ENCODE measurements at regions of chr1 and their contacts with region 1.

Region 1: DNA sequence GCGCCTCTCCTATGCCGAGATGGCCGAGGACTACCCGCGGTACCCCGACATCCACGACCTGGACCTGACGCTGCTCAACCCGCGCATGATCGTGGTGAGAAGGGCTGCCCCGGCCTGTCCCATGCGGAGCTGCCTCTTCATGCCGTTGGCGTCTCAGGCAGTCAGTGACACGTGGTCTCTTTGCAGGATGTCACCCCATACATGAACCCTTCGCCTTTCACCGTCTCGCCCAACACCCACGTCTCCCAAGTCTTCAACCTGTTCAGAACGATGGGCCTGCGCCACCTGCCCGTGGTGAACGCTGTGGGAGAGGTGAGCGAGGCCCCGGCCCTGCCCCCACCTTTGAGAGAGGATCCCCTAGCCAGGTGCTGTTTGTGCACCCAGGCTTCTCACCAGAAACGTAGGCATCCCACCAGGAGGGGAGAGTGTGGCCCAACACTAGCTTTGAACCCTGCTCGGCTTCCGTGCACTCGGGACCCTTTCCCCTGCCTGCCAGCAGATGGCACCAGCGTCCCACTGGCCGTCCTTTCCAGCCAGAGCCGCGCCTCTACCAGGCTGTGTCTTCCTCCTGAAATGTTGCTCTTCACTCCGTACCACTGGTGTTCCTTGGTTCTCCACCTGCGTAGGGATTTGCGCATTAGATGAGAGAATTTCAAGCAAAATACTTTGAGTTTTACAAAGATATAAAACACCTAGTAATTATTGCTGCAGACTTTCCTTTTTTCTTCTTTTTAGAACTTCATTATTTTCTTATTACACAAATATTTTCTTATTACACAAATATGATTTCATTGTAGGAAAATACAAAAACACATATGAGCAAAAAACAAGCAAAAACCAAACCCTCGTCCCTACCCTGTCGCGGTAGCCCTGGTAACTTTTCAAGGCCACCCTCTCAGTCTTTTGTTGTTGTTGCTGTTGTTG is 9.0 kb downstream of the NPPA start:
- DNase-seq: no peak
- H3K4me3 ChIP-seq: no peak overlapping the region
- H3K27me3 ChIP-seq: no peaks in the 10 kb centered on the region
- CTCF ChIP-seq: peak; percentile 100

Region 2: GRCh38 chr1:11828511-11828910 is 10.1 kb before region 1 on chr1:
- CTCF ChIA-PET with region 1: interaction called, 13 read pairs
- POLR2A ChIA-PET with region 1: no interaction called
- DNase-seq: no peak
- H3K4me3 ChIP-seq: no peak overlapping the region
- H3K27me3 ChIP-seq: no peaks in the 10 kb centered on the region
- CTCF ChIP-seq: no peak

Region 3: GRCh38 chr1:11893907-11894251 is 55.3 kb after region 1 on chr1:
- CTCF ChIA-PET with region 1: interaction called, 22 read pairs
- POLR2A ChIA-PET with region 1: no interaction called
- DNase-seq: no peak
- H3K4me3 ChIP-seq: no peak overlapping the region
- H3K27me3 ChIP-seq: peaks cover 14% of the 10 kb centered on the region
- CTCF ChIP-seq: peak; percentile 97

Region 4: DNA sequence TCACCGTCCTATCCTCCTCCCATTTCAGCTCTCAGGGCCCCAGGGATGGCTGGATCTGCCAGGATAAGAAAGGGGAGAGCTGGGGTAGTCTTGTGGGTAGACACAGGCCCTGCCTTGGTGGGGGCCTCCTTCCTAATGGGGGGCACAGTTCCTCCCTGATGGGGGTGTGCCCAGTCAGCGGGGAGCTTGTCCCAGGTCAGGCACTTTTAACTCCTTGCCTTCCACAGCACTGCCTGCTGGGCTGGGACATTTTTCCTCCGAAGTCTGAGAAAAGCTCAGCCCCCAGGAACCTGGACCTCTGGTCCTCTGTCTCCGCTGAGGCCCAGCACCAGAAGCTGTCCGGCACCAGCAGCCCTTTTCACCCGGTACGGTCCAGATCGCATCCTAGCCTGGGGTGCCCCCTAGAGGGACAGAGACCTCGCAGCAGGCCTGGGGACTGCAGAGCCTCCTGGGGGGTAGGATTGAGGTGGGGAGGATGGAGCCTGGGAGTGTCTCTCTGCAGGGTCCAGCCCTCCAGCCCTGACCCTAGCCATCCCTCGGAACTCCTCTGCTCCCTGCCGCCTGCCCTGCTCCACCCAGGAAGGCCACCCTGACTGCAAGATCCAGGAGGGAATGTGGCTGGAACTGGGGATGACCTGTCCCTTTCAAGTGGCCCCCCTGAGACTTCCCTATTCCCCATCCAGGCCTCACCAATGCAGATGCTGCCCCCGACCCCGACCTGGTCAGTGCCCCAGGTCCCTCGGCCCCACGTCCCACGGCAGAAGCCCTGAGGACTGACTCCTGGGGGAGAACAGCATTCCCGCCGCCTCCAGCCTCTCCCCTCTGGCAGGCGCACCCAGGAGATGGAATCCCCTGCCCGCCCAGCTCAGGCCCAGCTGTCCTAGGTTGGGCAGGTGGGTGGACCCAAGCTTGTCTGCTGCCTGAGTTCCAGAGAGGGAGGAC is 192.7 kb after region 1 on chr1:
- CTCF ChIA-PET with region 1: interaction called, 12 read pairs
- POLR2A ChIA-PET with region 1: no interaction called
- DNase-seq: no peak
- H3K4me3 ChIP-seq: no peak overlapping the region
- H3K27me3 ChIP-seq: no peaks in the 10 kb centered on the region
- CTCF ChIP-seq: peak; percentile 77